ENCODE measurements at regions of chr12 and their contacts with region 1.

Region 1: DNA sequence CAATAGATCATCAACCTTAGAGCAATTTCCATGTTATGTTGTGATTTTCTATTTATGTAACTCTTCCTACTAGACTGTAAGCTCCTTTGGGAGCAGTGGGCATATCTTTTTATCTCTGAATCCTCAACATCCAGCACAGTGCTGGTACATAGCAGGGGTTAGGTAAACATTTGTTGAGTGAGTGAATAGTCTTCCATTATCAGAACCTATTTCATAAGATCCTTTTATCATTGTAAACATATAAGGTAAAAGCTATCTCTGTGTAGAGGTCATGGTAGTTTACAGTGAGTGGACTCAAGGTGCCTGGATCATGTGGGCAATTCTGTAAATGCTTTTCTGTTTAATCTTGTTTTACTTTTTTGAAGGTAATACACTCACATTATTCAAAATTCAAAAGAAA is 15.1 kb downstream of the FKBP11 start:
- DNase-seq: peak in 1 of 2 experiments; percentile 46
- ATAC-seq: peak in 1 of 2 experiments; percentile 72; a peak in 3 of 6 replicates
- H3K4me3 ChIP-seq: no peak overlapping the region
- H3K27ac ChIP-seq: no peak overlapping the region
- H3K4me1 ChIP-seq: peaks cover 22% of the 10 kb centered on the region
- CTCF ChIP-seq: no peak
- EP300 ChIP-seq: no peak
- POLR2A ChIP-seq: no peak
- RAD21 ChIP-seq: no peak

Region 2: GRCh38 chr12:48671231-48671856 is 238.9 kb before region 1 on chr12:
- CTCF ChIA-PET with region 1: no interaction called
- POLR2A ChIA-PET with region 1: no interaction called
- DNase-seq: no peak
- ATAC-seq: peak in 1 of 2 experiments; percentile 42; a peak in 2 of 6 replicates
- H3K4me3 ChIP-seq: no peak overlapping the region
- H3K27ac ChIP-seq: no peak overlapping the region
- H3K4me1 ChIP-seq: no peaks in the 10 kb centered on the region
- CTCF ChIP-seq: no peak
- EP300 ChIP-seq: no peak
- POLR2A ChIP-seq: no peak
- RAD21 ChIP-seq: no peak

Region 3: GRCh38 chr12:48924617-48925303 is 14.6 kb after region 1 on chr12:
- CTCF ChIA-PET with region 1: interaction called, 60 read pairs
- POLR2A ChIA-PET with region 1: no interaction called
- DNase-seq: peak; percentile 59 to 62
- ATAC-seq: peak; percentile 84 to 86
- H3K4me3 ChIP-seq: peak overlapping the region; percentile 71
- H3K27ac ChIP-seq: peak overlapping the region; percentile 77 to 95
- H3K4me1 ChIP-seq: peaks cover 6% of the 10 kb centered on the region; the same call in 1 of the 3 replicates
- CTCF ChIP-seq: peak; percentile 31; the same call in 2 of the 3 replicates
- EP300 ChIP-seq: no peak
- POLR2A ChIP-seq: no peak
- RAD21 ChIP-seq: peak; percentile 35 to 38; a peak in 3 of 5 replicates

Measured in A549 (cell line).